Adrenal gland (tissue), 19 donors: ENCODE measurements at regions of chr19 and their contacts with region 1.

Region 1: DNA sequence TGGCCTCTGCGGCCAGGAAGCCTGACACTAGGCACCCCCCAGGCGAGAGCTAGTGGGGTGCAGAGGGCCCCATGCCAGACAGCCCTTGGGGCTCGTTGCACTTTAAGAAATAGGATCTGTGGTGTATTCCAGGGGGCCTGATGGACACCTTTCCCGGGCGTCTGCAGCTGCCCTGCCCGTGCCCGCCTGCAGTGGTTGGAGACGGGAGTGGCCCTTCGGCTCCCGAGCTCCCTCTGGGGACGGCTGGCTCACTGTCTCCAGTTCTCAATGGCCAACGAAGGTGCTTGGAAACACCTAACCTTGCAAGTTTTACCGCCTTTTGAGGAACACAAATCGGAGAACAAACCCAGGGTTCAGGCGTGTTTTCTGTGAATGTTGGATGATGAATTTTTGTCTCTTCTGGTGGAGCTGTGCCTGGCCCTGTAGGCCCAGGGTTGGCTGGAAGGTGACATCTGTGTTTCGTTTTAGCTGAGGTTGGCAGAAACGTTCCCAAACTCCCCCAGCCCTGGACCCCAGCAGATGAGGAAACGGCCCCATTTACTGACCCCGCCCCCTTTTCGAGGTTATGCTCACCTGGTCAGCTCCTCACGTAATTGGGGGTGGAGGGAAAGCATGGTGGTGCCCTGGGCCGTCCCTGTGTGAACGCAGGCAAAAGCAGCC is 17.4 kb upstream of the NPAS1 start:
- DNase-seq: no peak
- H3K4me3 ChIP-seq: no peak overlapping the region
- H3K27ac ChIP-seq: no peak overlapping the region
- H3K4me1 ChIP-seq: peaks cover 0 to 6% of the 10 kb centered on the region in 2 donors
- H3K27me3 ChIP-seq: no peaks in the 10 kb centered on the region
- CTCF ChIP-seq: no peak
- POLR2A ChIP-seq: no peak

Region 2: DNA sequence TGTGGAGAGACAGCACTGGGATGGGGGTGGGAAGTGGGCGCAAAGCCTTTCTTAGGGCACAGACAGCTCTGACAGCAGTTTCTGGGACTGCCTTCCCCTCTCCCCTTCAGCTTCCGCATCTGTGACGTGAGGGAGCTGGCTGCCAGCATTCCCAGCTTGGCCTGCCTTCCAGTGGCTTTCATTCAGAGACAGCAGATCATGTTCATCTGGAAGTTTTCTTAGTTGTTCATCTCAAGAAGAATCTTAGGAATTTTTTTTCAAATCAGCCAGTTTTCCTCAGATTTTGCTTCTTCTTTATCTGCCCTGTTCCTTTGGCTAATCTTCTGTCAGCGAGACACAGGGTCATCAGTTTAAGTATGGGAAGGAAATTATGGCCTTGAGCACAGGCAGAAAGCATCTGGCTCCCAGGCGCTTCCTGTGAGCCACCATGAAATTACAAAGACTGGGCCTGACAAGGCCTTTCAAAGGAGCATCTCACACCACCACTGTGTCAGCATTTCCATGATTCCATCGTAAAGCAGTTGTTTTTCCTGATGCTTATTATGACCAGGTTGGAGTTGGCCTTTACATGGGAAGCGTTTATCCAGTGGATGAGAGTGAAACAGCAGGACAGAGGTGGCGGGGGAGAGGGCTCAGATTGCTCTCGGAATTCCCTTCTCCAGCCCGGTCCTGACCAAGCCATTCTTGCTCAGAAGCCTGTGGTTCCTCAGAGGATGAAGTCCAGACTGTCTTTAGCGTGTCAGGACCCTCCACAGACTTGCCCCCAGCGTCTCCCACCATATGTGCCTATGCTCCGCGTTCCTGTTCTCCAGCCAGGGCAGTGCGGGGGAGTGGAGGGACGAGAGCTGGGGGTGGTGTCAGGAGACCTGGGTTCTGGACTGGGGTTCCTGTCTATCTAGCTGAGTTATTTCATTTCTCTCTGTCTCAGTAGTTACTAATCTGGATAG is 97.8 kb before region 1 on chr19:
- intact Hi-C with region 1: no loop called
- DNase-seq: peak; percentile 38 to 82 (median 57)
- H3K4me3 ChIP-seq: no peak overlapping the region
- H3K27ac ChIP-seq: peak overlapping the region in 4 of 5 donors; percentile 67 to 86 (median 74)
- H3K4me1 ChIP-seq: peaks cover 42 to 62% of the 10 kb centered on the region in 2 donors
- H3K27me3 ChIP-seq: no peaks in the 10 kb centered on the region
- CTCF ChIP-seq: peak in 1 of 6 experiments; percentile 4
- POLR2A ChIP-seq: no peak

Region 3: GRCh38 chr19:47036097-47036651 is 33.9 kb after region 1 on chr19:
- intact Hi-C with region 1: no loop called
- DNase-seq: no peak
- H3K4me3 ChIP-seq: peak overlapping the region in 3 of 4 donors; percentile 1 to 43 (median 40)
- H3K27ac ChIP-seq: peak overlapping the region in 1 of 5 donors; percentile 3
- H3K4me1 ChIP-seq: peaks cover 4 to 9% of the 10 kb centered on the region in 2 donors
- H3K27me3 ChIP-seq: no peaks in the 10 kb centered on the region
- CTCF ChIP-seq: peak in 2 of 6 experiments; percentile 34 to 36
- POLR2A ChIP-seq: no peak

Region 4: DNA sequence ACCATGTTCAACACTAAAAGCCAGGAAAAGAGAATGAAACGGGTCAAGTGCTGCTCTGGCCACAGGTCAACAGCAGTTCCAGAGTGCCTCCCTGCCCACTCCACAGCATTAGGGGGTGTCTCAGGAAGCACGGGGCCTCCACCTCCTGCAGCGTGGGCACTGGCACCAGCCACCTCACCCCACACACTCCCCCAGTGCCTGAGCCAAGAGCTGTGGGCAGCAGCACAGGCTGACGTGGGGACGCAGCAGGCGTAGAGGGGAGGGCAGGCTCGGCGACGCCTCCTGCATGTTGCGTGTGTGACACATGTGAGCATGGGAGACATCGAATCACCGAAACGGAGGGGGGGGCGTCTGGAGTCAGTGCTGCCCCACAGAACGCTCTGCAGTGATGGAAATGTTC is 67.6 kb after region 1 on chr19:
- intact Hi-C with region 1: loop called in 1 of 2 experiments (anchors 2 kb)
- DNase-seq: no peak
- H3K4me3 ChIP-seq: no peak overlapping the region
- H3K27ac ChIP-seq: no peak overlapping the region
- H3K4me1 ChIP-seq: no peaks in the 10 kb centered on the region
- H3K27me3 ChIP-seq: no peaks in the 10 kb centered on the region
- CTCF ChIP-seq: no peak
- POLR2A ChIP-seq: no peak